CD4-positive, alpha-beta T cell (primary cell): ENCODE measurements at regions of chr4 and their contacts with region 1.

Region 1: DNA sequence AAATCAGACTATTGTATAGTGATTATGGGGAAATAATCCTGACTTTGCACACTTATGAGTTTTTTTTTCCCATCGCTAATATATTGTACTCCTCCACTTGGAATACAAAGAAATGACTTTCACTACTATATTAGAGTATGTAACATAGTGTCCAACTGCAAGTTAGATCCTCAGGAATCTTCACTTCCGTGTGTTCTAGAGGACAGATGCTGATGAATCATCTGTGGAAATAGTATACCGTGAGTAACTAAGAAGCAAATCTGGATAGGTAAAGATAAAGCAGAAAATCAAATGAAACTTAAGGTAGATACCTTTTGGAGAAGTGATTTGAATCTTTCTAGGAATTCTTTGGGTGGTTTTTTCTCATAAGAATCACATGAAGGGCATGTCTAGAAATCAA is 8.3 kb downstream of the IL21 start:
- DNase-seq: no peak
- ATAC-seq: no peak
- H3K4me3 ChIP-seq: no peak overlapping the region
- H3K4me3 Mint-ChIP-seq: no peak overlapping the region
- H3K27ac ChIP-seq: no peak overlapping the region
- H3K27ac Mint-ChIP-seq: no peak overlapping the region
- H3K4me1 ChIP-seq: peaks cover 5% of the 10 kb centered on the region
- H3K4me1 Mint-ChIP-seq: peaks cover 20% of the 10 kb centered on the region
- H3K27me3 ChIP-seq: no peaks in the 10 kb centered on the region
- H3K27me3 Mint-ChIP-seq: no peaks in the 10 kb centered on the region
- CTCF ChIP-seq: no peak

Region 2: GRCh38 chr4:122647656-122648055 is 35.1 kb after region 1 on chr4:
- CTCF ChIA-PET with region 1: no interaction called
- POLR2A ChIA-PET with region 1: no interaction called
- intact Hi-C with region 1: loop called (anchors 5 kb)
- DNase-seq: no peak
- ATAC-seq: no peak
- H3K4me3 ChIP-seq: no peak overlapping the region
- H3K4me3 Mint-ChIP-seq: no peak overlapping the region
- H3K27ac ChIP-seq: no peak overlapping the region
- H3K27ac Mint-ChIP-seq: no peak overlapping the region
- H3K4me1 ChIP-seq: no peaks in the 10 kb centered on the region
- H3K4me1 Mint-ChIP-seq: no peaks in the 10 kb centered on the region
- H3K27me3 ChIP-seq: no peaks in the 10 kb centered on the region
- H3K27me3 Mint-ChIP-seq: no peaks in the 10 kb centered on the region
- CTCF ChIP-seq: no peak